Caco-2 (cell line): ENCODE measurements at regions of chr7 and their contacts with region 1.

Region 1: GRCh38 chr7:92528188-92528957 is at the starts of genes PEX1 and RBM48:
- DNase-seq: peak; percentile 97 to 99
- H3K4me3 ChIP-seq: peak within 1 kb of the TSS; percentile 97
- H3K4me3 Mint-ChIP-seq: peak within 1 kb of the TSS; percentile 97
- H3K27ac Mint-ChIP-seq: peak within 1 kb of the TSS; percentile 98
- H3K4me1 ChIP-seq: peaks cover 12% of the 10 kb centered on the region
- H3K4me1 Mint-ChIP-seq: peaks cover 6% of the 10 kb centered on the region
- H3K27me3 ChIP-seq: no peaks in the 10 kb centered on the region
- H3K27me3 Mint-ChIP-seq: no peaks in the 10 kb centered on the region
- CTCF ChIP-seq: peak in 1 of 2 experiments; percentile 58
- total RNA-seq, gene PEX1: 19.5 and 20.1 TPM in 2 replicates
- total RNA-seq, gene RBM48: 14.2 and 14.4 TPM in 2 replicates

Region 2: GRCh38 chr7:92461027-92462003 is 67.1 kb before region 1 on chr7:
- CTCF ChIA-PET with region 1: interaction called, 10 read pairs
- POLR2A ChIA-PET with region 1: interaction called, 5 read pairs
- intact Hi-C with region 1: no loop called
- DNase-seq: peak in 1 of 2 experiments; percentile 45
- H3K4me3 ChIP-seq: no peak overlapping the region
- H3K4me3 Mint-ChIP-seq: no peak overlapping the region
- H3K27ac Mint-ChIP-seq: no peak overlapping the region
- H3K4me1 ChIP-seq: peaks cover 14% of the 10 kb centered on the region
- H3K4me1 Mint-ChIP-seq: peaks cover 22% of the 10 kb centered on the region
- H3K27me3 ChIP-seq: no peaks in the 10 kb centered on the region
- H3K27me3 Mint-ChIP-seq: no peaks in the 10 kb centered on the region
- CTCF ChIP-seq: peak; percentile 73 to 87

Region 3: GRCh38 chr7:92560602-92561001 is 32.2 kb after region 1 on chr7:
- CTCF ChIA-PET with region 1: interaction called, 5 read pairs
- POLR2A ChIA-PET with region 1: interaction called, 11 read pairs
- intact Hi-C with region 1: loop called (anchors 1 kb)
- DNase-seq: peak in 1 of 2 experiments; percentile 8
- H3K4me3 ChIP-seq: no peak overlapping the region
- H3K4me3 Mint-ChIP-seq: no peak overlapping the region
- H3K27ac Mint-ChIP-seq: no peak overlapping the region
- H3K4me1 ChIP-seq: peaks cover 23% of the 10 kb centered on the region
- H3K4me1 Mint-ChIP-seq: peaks cover 12% of the 10 kb centered on the region
- H3K27me3 ChIP-seq: no peaks in the 10 kb centered on the region
- H3K27me3 Mint-ChIP-seq: no peaks in the 10 kb centered on the region
- CTCF ChIP-seq: no peak

Region 4: GRCh38 chr7:92590711-92591310 is 62.4 kb after region 1 on chr7:
- CTCF ChIA-PET with region 1: interaction called, 5 read pairs
- POLR2A ChIA-PET with region 1: interaction called, 9 read pairs
- intact Hi-C with region 1: loop called (anchors 1 kb)
- DNase-seq: no peak
- H3K4me3 ChIP-seq: peak overlapping the region; percentile 83
- H3K4me3 Mint-ChIP-seq: peak overlapping the region; percentile 99
- H3K27ac Mint-ChIP-seq: no peak overlapping the region
- H3K4me1 ChIP-seq: peaks cover 15% of the 10 kb centered on the region; the same call in 1 of the 2 replicates
- H3K4me1 Mint-ChIP-seq: peaks cover 19% of the 10 kb centered on the region
- H3K27me3 ChIP-seq: no peaks in the 10 kb centered on the region
- H3K27me3 Mint-ChIP-seq: no peaks in the 10 kb centered on the region
- CTCF ChIP-seq: no peak

Region 5: DNA sequence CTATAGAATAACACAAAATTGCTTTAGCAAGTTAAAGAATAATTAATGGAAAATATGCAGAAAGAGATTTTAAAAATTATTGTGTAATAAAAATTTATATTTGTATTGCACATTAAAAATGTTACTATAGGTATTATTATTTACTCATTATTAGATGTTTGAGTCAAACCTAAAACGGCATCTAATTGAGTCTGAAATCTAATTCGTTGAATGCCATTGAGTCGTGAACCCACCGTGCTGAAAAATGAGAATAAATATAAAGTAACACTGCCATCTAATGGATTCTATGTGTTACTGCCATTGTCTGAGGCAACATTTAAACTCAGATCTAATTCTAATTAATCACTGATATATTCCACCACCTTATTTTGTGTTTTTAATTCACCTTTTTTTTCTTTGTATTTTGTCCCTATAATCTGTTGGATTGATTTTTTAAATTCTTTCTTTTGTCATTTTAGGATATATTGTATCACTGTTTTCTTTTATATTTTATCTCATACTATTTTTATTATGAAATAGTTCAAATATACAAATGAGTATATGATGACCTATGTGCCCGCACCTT is 527.3 kb after region 1 on chr7:
- CTCF ChIA-PET with region 1: no interaction called
- POLR2A ChIA-PET with region 1: no interaction called
- intact Hi-C with region 1: loop called (anchors 5 kb)
- DNase-seq: peak in 1 of 2 experiments; percentile 21
- H3K4me3 ChIP-seq: no peak overlapping the region
- H3K4me3 Mint-ChIP-seq: no peak overlapping the region
- H3K27ac Mint-ChIP-seq: no peak overlapping the region
- H3K4me1 ChIP-seq: no peaks in the 10 kb centered on the region
- H3K4me1 Mint-ChIP-seq: no peaks in the 10 kb centered on the region
- H3K27me3 ChIP-seq: no peaks in the 10 kb centered on the region
- H3K27me3 Mint-ChIP-seq: no peaks in the 10 kb centered on the region
- CTCF ChIP-seq: peak; percentile 50 to 76